Activated CD8-positive, alpha-beta T cell treated with anti-CD3 and anti-CD28 coated beads, Interleukin-2, amount 10 ng/mL, durations not matched to agents 7 days and 5 days (primary cell): ENCODE measurements at regions of chr9 and their contacts with region 1.

Region 1: DNA sequence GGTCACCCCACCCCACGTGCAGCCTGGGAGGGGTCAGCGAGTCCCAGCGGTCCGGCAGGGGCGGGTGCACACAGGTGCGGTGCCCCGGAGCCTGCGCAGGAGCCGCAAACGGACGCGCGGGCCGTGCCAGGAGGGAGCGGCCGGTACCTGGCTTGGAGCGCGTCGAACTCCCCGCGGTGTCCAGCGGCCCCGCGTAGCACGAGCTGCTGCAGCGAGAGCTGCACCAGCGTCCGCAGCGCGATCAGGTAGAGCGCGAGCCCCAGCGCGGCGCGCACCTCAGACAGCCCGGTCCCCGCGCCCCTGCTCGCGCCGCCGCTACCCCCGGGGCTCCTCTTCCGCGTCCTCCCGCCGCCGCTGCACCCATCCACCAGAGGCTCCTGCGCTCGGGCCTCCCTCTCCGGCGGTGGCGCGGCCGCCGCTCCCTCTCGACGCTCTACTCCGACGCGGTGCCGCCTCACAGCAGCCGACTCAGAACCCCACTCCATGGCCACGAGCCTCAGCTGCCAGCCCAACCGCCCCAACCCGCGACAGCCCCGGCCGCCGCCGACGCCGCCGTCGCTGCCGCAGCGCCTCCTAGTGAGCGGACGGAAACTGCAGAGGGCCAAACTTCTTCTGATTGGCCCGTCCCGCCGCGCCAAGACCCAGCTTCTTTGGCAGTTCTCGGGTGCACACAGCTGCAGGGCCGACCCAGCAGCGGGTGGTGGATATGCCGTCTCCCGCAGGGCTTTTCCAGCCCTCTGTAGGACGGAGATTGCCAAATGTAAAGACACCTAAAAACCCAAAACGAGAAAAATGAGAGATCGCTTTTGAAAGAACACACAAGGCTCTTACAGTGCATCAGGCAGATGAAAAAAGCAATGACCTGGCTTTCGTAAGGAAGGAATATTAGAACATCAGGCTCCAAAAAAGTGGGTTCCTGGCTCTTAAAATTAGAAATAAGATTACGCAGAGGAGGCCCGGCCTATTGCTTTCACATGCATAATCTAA is at the start of gene ERMP1:
- DNase-seq: peak; percentile 90
- ATAC-seq: peak; percentile 90
- H3K4me3 Mint-ChIP-seq: peak within 1 kb of the TSS; percentile 97
- H3K27ac Mint-ChIP-seq: peak within 1 kb of the TSS; percentile 78
- H3K4me1 Mint-ChIP-seq: peaks cover 58% of the 10 kb centered on the region
- H3K27me3 Mint-ChIP-seq: peaks cover 3% of the 10 kb centered on the region
- total RNA-seq, gene ERMP1: 28.0 to 30.6 TPM

Region 2: GRCh38 chr9:5628530-5629311 is 204.1 kb before region 1 on chr9 and contains the start of gene RIC1:
- CTCF ChIA-PET with region 1: interaction called, 14 read pairs
- POLR2A ChIA-PET with region 1: interaction called, 4 read pairs
- DNase-seq: peak; percentile 94
- ATAC-seq: peak; percentile 87
- H3K4me3 Mint-ChIP-seq: peak within 1 kb of the TSS; percentile 100
- H3K27ac Mint-ChIP-seq: peak within 1 kb of the TSS; percentile 97
- H3K4me1 Mint-ChIP-seq: peaks cover 49% of the 10 kb centered on the region
- H3K27me3 Mint-ChIP-seq: no peaks in the 10 kb centered on the region
- total RNA-seq, gene RIC1: 16.7 to 17.8 TPM

Region 3: GRCh38 chr9:5843794-5844504 is 11.1 kb after region 1 on chr9:
- CTCF ChIA-PET with region 1: interaction called, 59 read pairs
- POLR2A ChIA-PET with region 1: interaction called, 10 read pairs
- DNase-seq: no peak
- ATAC-seq: peak; percentile 18
- H3K4me3 Mint-ChIP-seq: peak overlapping the region; percentile 70
- H3K27ac Mint-ChIP-seq: peak overlapping the region; percentile 92
- H3K4me1 Mint-ChIP-seq: peaks cover 91% of the 10 kb centered on the region
- H3K27me3 Mint-ChIP-seq: peaks cover 2% of the 10 kb centered on the region

Region 4: DNA sequence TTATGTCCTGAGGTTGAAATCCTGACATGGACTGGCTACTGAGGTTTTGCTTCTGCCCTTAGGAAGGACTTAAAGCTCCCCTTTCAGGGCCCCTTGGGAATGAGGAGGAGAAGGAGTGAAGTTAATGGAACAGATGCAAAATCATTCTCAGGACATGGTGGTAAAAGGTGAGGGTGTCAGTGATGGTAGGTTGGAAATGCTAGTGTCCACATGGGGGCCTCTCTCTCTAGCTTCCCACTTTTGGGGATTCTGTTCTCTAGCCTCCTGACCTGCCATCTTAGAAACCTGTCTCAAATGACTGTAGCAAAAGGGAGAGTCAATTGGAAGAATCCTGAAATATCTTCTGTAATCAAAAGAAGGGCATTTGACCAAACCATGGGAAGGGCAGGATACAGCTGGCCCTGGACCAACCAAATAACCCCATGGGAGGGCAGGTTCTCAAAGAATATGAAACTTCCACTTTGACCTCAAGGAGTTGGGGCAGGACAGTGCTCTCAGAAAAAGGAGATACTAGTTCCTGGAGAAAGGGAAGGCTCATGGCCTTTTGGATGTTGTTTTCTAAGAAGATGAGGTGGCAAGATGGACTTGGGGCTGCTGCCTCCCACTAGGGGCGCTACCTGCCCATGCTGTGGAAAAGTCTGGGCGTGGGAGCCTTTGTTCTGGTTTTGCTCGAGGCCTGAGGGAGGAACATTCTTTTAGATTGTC is 36.6 kb after region 1 on chr9:
- CTCF ChIA-PET with region 1: interaction called, 24 read pairs
- POLR2A ChIA-PET with region 1: no interaction called
- DNase-seq: peak; percentile 35
- ATAC-seq: no peak
- H3K4me3 Mint-ChIP-seq: no peak overlapping the region
- H3K27ac Mint-ChIP-seq: peak overlapping the region; percentile 22
- H3K4me1 Mint-ChIP-seq: peaks cover 19% of the 10 kb centered on the region
- H3K27me3 Mint-ChIP-seq: no peaks in the 10 kb centered on the region

Region 5: GRCh38 chr9:5939530-5939929 is 106.7 kb after region 1 on chr9:
- CTCF ChIA-PET with region 1: no interaction called
- POLR2A ChIA-PET with region 1: no interaction called
- DNase-seq: no peak
- ATAC-seq: no peak
- H3K4me3 Mint-ChIP-seq: no peak overlapping the region
- H3K27ac Mint-ChIP-seq: no peak overlapping the region
- H3K4me1 Mint-ChIP-seq: no peaks in the 10 kb centered on the region
- H3K27me3 Mint-ChIP-seq: no peaks in the 10 kb centered on the region